SK-N-SH (cell line): ENCODE measurements at regions of chr5 and their contacts with region 1.

Region 1: DNA sequence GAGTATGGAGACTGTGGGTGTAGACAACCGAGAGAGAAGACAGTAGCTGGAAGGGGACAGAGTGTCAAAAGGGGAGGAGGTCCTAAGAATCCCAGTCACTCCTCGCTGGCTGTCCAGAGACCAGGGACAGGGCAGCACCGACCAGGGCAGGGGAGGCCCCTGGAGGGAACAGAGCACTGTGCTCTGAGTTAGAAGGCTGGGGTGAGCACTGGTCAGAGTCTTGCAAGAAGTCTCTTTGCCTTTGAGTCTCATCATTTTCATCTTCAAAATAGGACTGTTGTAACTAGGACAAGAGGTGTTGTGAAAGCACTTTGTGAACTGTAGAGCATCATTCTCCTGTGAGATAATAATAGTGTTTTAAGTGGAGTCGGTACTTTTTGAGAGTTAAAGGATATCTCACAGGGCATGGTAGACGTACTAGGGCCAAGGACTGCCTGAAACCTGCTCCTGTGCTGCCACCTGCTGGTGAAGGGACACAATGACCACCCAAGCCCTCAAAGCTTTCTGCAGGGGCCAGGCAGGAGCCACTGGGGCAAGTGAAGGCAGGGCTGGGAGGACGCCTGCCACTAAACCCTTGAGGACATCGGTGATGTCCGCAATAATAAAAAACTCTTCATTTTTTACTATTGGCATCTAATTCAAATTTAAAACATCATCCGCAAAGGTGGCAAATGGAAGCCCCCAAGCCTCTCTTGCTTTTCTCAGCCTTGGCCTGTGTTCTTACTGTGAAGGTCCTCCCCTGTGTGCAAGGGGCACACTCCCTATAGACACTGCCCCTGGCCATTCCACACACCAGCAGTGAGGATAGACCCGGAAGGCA is 28.2 kb downstream of the SLC6A7 start:
- DNase-seq: peak; percentile 91
- H3K4me3 ChIP-seq: no peak overlapping the region; a peak in 1 of 4 replicates
- H3K27ac ChIP-seq: no peak overlapping the region
- H3K4me1 ChIP-seq: no peaks in the 10 kb centered on the region
- H3K27me3 ChIP-seq: no peaks in the 10 kb centered on the region
- CTCF ChIP-seq: peak; percentile 92
- EP300 ChIP-seq: no peak
- RAD21 ChIP-seq: peak; percentile 96

Region 2: GRCh38 chr5:149834246-149834855 is 383.7 kb before region 1 on chr5:
- CTCF ChIA-PET with region 1: interaction called, 11 read pairs
- POLR2A ChIA-PET with region 1: no interaction called
- DNase-seq: peak; percentile 81
- H3K4me3 ChIP-seq: no peak overlapping the region
- H3K27ac ChIP-seq: no peak overlapping the region
- H3K4me1 ChIP-seq: no peaks in the 10 kb centered on the region
- H3K27me3 ChIP-seq: no peaks in the 10 kb centered on the region
- CTCF ChIP-seq: peak; percentile 81
- EP300 ChIP-seq: no peak
- RAD21 ChIP-seq: peak; percentile 89

Region 3: GRCh38 chr5:150137168-150137957 is 80.7 kb before region 1 on chr5:
- CTCF ChIA-PET with region 1: interaction called, 173 read pairs
- POLR2A ChIA-PET with region 1: no interaction called
- DNase-seq: no peak
- H3K4me3 ChIP-seq: no peak overlapping the region
- H3K27ac ChIP-seq: peak overlapping the region; percentile 87 to 99
- H3K4me1 ChIP-seq: peaks cover 47 to 64% of the 10 kb centered on the region in 2 experiments
- H3K27me3 ChIP-seq: no peaks in the 10 kb centered on the region
- CTCF ChIP-seq: no peak
- EP300 ChIP-seq: no peak
- RAD21 ChIP-seq: no peak

Region 4: GRCh38 chr5:150155258-150156026 is 62.6 kb before region 1 on chr5 and contains the start of gene PDGFRB:
- CTCF ChIA-PET with region 1: interaction called, 14 read pairs
- POLR2A ChIA-PET with region 1: no interaction called
- DNase-seq: peak; percentile 88
- H3K4me3 ChIP-seq: peak within 1 kb of the TSS; percentile 67 to 96
- H3K27ac ChIP-seq: peak within 1 kb of the TSS; percentile 94 to 98
- H3K4me1 ChIP-seq: peaks cover 43 to 86% of the 10 kb centered on the region in 2 experiments
- H3K27me3 ChIP-seq: no peaks in the 10 kb centered on the region
- CTCF ChIP-seq: no peak; the same call in 1 of the 2 replicates
- EP300 ChIP-seq: peak; percentile 56 to 59; a peak in 2 of 4 replicates
- RAD21 ChIP-seq: peak; percentile 4; the same call in 1 of the 2 replicates
- polyA plus RNA-seq, gene PDGFRB: 25.9 and 32.1 TPM in 2 replicates

Region 5: GRCh38 chr5:150175076-150175935 is 42.8 kb before region 1 on chr5:
- CTCF ChIA-PET with region 1: interaction called, 13 read pairs
- POLR2A ChIA-PET with region 1: no interaction called
- DNase-seq: peak; percentile 83
- H3K4me3 ChIP-seq: no peak overlapping the region
- H3K27ac ChIP-seq: no peak overlapping the region
- H3K4me1 ChIP-seq: no peaks in the 10 kb centered on the region; a peak in 1 of 4 replicates
- H3K27me3 ChIP-seq: no peaks in the 10 kb centered on the region
- CTCF ChIP-seq: peak; percentile 60
- EP300 ChIP-seq: no peak
- RAD21 ChIP-seq: peak; percentile 62

Region 6: GRCh38 chr5:150186897-150187296 is 31.2 kb before region 1 on chr5:
- CTCF ChIA-PET with region 1: interaction called, 13 read pairs
- POLR2A ChIA-PET with region 1: no interaction called
- DNase-seq: peak; percentile 58
- H3K4me3 ChIP-seq: no peak overlapping the region
- H3K27ac ChIP-seq: no peak overlapping the region
- H3K4me1 ChIP-seq: peaks cover 0 to 4% of the 10 kb centered on the region in 2 experiments; a peak in 1 of 4 replicates
- H3K27me3 ChIP-seq: peaks cover 33% of the 10 kb centered on the region
- CTCF ChIP-seq: no peak
- EP300 ChIP-seq: no peak
- RAD21 ChIP-seq: no peak

Region 7: GRCh38 chr5:150350524-150351344 is 132.7 kb after region 1 on chr5:
- CTCF ChIA-PET with region 1: interaction called, 22 read pairs
- POLR2A ChIA-PET with region 1: interaction called, 3 read pairs
- DNase-seq: peak; percentile 82
- H3K4me3 ChIP-seq: no peak overlapping the region
- H3K27ac ChIP-seq: no peak overlapping the region
- H3K4me1 ChIP-seq: peaks cover 0 to 12% of the 10 kb centered on the region in 2 experiments; a peak in 2 of 4 replicates
- H3K27me3 ChIP-seq: no peaks in the 10 kb centered on the region
- CTCF ChIP-seq: peak; percentile 85
- EP300 ChIP-seq: no peak
- RAD21 ChIP-seq: peak; percentile 89